ENCODE measurements at regions of chr21 and their contacts with region 1.

Region 1: GRCh38 chr21:18499761-18500376 is 96.3 kb upstream of the TMPRSS15 start:
- DNase-seq: no peak
- ATAC-seq: no peak
- H3K4me3 ChIP-seq: no peak overlapping the region
- H3K27ac ChIP-seq: no peak overlapping the region
- H3K4me1 ChIP-seq: no peaks in the 10 kb centered on the region
- H3K27me3 ChIP-seq: no peaks in the 10 kb centered on the region
- CTCF ChIP-seq: peak; percentile 43

Region 2: GRCh38 chr21:16968436-16968835 is 1531.4 kb before region 1 on chr21:
- intact Hi-C with region 1: loop called in 1 of 2 experiments (anchors 5 kb)
- DNase-seq: no peak
- ATAC-seq: no peak
- H3K4me3 ChIP-seq: no peak overlapping the region
- H3K27ac ChIP-seq: no peak overlapping the region
- H3K4me1 ChIP-seq: no peaks in the 10 kb centered on the region
- H3K27me3 ChIP-seq: no peaks in the 10 kb centered on the region
- CTCF ChIP-seq: no peak

Region 3: GRCh38 chr21:18218331-18218730 is 281.5 kb before region 1 on chr21:
- intact Hi-C with region 1: no loop called
- DNase-seq: no peak
- ATAC-seq: no peak
- H3K4me3 ChIP-seq: no peak overlapping the region
- H3K27ac ChIP-seq: no peak overlapping the region
- H3K4me1 ChIP-seq: no peaks in the 10 kb centered on the region
- H3K27me3 ChIP-seq: no peaks in the 10 kb centered on the region
- CTCF ChIP-seq: no peak

Region 4: DNA sequence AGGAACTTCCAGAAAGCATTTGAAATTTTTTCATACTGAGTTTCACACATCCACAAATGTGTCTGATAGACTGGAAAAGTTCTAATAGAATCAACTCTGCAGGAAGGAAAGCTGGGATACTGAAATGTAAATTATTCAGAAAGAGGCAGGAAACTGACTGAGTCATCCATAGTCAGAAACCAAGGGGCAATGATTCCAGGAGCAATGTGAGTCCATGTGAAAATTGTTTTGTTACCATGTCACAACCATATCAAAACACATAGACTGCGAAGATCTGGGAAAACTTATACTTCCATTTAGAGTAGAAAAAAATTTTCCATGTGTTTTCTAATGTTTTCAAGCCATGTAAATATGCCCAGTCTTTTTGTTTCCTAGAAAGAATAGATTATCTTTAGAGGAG is 46.0 kb after region 1 on chr21:
- intact Hi-C with region 1: no loop called
- DNase-seq: no peak
- ATAC-seq: no peak
- H3K4me3 ChIP-seq: no peak overlapping the region
- H3K27ac ChIP-seq: no peak overlapping the region
- H3K4me1 ChIP-seq: no peaks in the 10 kb centered on the region
- H3K27me3 ChIP-seq: no peaks in the 10 kb centered on the region
- CTCF ChIP-seq: no peak

Region 5: DNA sequence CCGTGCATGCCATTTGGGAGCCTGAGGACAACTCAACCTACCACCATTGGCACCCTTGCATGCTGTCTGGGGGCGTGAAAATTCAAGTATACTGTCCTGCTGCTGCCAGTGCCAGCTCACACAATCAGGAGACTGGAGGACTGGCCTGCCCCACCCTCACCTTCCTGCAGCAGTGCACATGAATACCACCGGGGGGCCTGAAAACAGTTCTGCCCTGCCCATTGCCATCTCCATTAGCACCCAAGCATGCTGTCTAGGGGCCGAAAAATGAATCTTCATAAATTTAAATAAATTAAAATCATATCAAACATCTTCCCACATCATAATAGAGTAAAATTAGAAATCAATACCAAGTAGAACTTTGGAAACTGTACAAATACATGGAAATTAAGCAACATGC is 225.8 kb after region 1 on chr21:
- intact Hi-C with region 1: no loop called
- DNase-seq: no peak
- ATAC-seq: no peak
- H3K4me3 ChIP-seq: no peak overlapping the region
- H3K27ac ChIP-seq: no peak overlapping the region
- H3K4me1 ChIP-seq: no peaks in the 10 kb centered on the region
- H3K27me3 ChIP-seq: no peaks in the 10 kb centered on the region
- CTCF ChIP-seq: no peak

Measured in psoas muscle (tissue), 8 donors.